ENCODE measurements at regions of chr2 and their contacts with region 1.

Region 1: DNA sequence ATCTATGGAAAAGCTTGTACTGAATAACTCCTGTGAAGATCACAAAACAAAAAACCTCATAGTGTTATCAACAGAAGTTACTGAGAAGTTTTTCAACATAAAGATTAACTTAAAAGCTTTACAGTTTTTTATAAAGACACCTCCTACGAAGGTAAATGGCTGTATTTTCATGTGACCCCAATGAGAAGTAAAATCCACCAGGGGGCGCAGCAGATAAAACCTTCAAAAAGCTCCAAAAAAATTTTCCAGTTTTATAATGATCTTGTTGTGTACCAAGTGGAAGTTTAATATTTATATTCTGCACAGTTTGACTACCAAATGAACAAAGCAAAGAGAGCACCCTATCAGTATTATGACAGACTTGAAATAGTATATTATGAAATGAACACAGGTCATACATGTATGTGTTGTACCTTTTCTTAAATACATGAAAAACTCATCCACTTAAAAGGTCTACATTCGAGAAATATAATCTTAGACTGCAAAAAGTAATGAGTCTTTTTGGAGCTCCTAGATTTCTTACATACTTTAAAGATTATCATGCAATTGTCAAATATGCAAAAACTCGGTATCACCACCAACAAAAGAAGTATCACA is 38.5 kb downstream of the PNO1 start:
- DNase-seq: peak in 1 of 2 donors; percentile 51
- H3K4me3 ChIP-seq: no peak overlapping the region
- H3K27ac ChIP-seq: peak overlapping the region in 1 of 2 donors; percentile 22
- H3K4me1 ChIP-seq: peaks cover 0 to 7% of the 10 kb centered on the region in 2 donors
- H3K27me3 ChIP-seq: no peaks in the 10 kb centered on the region
- CTCF ChIP-seq: peak; percentile 55 to 63 (median 60)
- POLR2A ChIP-seq: no peak

Region 2: DNA sequence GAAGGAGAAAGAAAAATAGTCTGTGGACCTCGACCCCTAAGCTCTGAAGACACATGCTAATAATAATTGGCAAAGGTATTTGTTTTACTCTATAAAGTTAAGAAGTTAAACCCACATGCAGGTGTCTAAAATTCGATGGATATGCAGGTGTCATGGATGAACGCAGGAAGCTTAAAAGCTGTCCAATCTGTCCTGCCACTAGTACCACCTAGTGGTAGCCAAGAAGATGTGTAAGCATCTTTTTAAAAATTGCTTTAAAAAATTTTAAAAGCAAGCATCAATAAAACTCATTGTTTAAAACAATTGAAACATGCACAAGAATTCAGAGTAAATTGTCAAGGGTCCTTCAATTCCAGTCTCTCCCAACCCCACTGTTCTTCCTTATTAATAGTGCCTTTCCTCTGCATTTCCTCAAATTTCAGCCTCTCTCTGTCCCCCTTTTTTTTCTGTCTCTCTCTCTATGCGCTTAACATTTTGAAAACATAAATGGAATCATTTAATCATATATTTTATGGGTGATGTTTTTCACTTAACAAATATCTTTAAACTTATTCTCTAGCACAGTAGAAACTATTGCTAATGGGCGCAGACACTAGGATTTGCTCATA is 86.7 kb after region 1 on chr2:
- intact Hi-C with region 1: loop called (anchors 5 kb)
- DNase-seq: no peak
- H3K4me3 ChIP-seq: no peak overlapping the region
- H3K27ac ChIP-seq: no peak overlapping the region
- H3K4me1 ChIP-seq: peaks cover 0 to 11% of the 10 kb centered on the region in 2 donors
- H3K27me3 ChIP-seq: no peaks in the 10 kb centered on the region
- CTCF ChIP-seq: peak; percentile 56 to 74 (median 66)
- POLR2A ChIP-seq: no peak